Upper lobe of right lung (tissue), 1 donor: ENCODE measurements at regions of chr1 and their contacts with region 1.

Region 1: DNA sequence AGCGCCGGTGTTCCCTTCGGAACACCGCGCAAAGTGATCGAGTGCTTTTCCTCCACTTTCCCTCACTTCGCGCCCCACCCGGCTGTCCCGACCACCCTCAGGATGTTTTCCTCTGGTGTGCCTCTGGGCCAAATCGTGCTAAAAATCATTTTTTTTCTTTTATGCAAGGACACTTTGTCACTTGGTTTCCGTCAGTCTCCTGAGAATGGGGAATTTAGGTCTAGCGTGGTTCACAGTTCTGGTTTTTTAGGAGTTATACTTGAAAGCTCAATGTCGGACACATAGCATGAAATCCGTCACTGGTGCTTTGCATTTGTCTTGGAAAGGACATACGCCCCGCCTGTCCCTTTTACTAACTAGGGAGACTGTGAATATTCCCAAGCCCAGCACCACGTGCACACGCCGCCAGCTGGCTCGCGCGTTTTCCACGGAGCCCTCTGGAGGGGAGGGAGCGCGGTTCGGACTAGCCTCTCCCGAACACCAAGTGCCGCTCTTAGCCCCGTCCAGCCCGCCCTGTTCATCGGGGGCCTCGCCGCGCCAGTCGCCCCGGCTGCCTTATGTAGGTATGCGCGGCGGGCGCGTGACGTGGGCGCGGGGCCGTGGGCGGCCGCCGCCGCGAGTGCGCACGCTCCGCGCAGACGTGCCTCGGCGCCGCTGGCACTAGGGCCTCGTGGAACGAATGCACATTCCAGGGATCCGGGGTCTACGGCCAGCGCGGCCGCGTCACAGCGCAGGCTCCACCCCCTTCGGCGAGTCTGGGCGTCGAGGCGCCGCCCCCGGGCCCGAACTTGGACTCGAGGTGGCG is 572 bp upstream of the IRF2BP2 start:
- DNase-seq: peak; percentile 99
- ATAC-seq: peak; percentile 85
- H3K4me3 ChIP-seq: peak overlapping the region; percentile 64
- H3K27ac ChIP-seq: peak overlapping the region; percentile 99
- H3K4me1 ChIP-seq: peaks cover 35% of the 10 kb centered on the region
- H3K27me3 ChIP-seq: no peaks in the 10 kb centered on the region
- CTCF ChIP-seq: no peak

Region 2: GRCh38 chr1:234722904-234723720 is 112.6 kb after region 1 on chr1:
- intact Hi-C with region 1: loop called (anchors 5 kb)
- DNase-seq: peak; percentile 81
- ATAC-seq: peak; percentile 34
- H3K4me3 ChIP-seq: peak overlapping the region; percentile 30
- H3K27ac ChIP-seq: peak overlapping the region; percentile 99
- H3K4me1 ChIP-seq: peaks cover 94% of the 10 kb centered on the region
- H3K27me3 ChIP-seq: no peaks in the 10 kb centered on the region
- CTCF ChIP-seq: no peak